ENCODE measurements at regions of chr12 and their contacts with region 1.

Region 1: DNA sequence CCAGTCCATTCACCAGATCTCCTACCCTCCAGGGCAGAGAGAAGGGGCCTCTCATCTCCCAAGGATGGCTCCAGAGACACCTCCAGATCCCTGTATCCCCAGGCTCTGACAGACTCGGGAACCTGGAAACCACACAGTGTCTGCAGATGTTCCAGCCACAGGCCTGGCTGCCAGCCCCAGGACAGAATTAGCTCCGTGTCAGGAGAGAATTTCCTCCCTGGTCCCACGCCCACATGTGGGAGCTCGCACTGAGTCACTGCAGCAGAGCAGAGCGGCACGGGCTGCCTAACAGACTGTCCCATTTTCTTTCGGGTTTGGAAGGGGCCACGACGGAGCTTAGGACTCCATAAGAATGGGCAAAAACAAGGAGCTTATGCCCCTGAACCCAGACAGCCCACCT is 33.6 kb downstream of the CMKLR1 start:
- DNase-seq: no peak
- CTCF ChIP-seq: no peak

Region 2: DNA sequence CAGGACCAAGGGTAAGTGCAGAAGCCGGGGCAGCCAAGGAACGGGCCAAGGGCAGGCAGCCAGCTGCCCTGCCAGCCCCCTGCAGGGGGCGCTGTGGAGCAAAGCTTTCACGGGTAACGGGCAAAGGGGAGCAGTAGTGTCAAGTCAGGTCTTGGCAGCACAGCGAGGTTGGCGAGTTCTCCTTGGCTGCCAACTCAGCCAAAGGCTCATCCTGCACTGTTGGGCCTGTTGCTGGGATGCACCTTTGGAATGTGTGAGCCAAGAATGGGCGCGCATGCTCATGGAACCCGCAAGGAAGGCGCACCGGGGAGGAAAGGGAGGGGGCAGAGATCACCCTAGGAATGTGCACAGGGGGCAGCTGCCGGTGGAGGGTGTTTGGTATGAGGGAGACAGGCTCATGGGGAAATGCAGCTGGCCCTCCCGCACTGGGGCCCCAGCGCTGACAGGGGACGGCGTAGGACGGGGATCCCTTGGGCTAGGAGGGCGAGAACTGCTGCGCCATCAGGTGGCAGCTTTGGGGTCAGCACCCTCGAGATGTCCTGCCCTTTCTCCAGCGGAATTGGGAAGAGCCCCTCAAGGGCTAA is 393.0 kb before region 1 on chr12:
- CTCF ChIA-PET with region 1: no interaction called
- POLR2A ChIA-PET with region 1: no interaction called
- DNase-seq: peak; percentile 82
- CTCF ChIP-seq: peak; percentile 91

Region 3: GRCh38 chr12:108004319-108004718 is 301.2 kb before region 1 on chr12:
- CTCF ChIA-PET with region 1: no interaction called
- POLR2A ChIA-PET with region 1: no interaction called
- DNase-seq: no peak
- CTCF ChIP-seq: no peak

Region 4: DNA sequence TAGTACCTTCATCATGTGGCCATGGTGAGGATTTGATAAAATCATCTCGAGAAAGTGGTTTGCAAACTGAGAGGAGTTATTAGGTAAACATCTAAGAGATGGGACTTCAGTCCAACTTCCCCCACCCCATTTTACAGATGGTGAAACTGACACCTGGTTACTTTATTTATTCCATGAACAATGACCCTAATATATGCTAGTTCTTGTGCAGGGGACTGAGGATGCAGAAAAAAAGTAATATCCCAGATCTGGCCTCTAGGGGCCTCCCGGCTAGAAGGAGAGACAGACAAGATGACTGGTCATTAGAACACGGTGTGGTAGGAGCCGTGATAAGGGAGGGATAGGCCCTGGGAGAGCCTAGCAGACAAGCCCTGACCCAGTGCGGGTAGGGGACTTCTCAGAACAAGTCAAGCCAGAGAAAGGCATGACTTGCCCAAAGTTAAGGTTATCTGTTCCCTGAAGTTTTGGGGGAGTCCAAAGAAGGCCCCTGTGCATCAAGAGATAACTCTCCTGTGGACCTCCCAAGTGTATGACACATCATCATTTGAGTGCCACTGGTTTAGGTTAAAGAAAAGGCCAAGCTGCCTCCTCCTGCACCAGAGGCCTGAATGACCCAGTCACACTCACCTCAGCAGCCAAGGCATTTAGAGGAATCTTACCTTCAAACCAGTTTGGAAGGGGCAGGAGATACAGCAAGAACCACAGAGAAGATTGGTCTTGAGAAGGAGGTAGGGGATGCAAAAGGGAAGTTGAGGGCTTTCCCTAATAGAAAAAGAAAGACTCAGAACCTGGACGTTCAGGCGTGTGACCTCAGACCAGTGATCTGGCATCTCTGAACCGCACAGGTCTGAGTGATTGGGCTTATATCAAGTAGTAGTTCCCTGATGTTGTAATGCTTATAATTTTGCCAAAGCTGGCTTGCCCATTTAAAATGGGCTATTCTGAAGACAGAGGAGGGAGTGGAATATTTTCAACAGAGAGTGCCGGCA is 32.0 kb after region 1 on chr12:
- CTCF ChIA-PET with region 1: interaction called, 10 read pairs
- POLR2A ChIA-PET with region 1: no interaction called
- DNase-seq: peak; percentile 61
- CTCF ChIP-seq: peak; percentile 44

Region 5: GRCh38 chr12:108633534-108634248 is 328.2 kb after region 1 on chr12 and contains the start of gene SELPLG:
- CTCF ChIA-PET with region 1: no interaction called
- POLR2A ChIA-PET with region 1: no interaction called
- DNase-seq: peak; percentile 87
- CTCF ChIP-seq: peak; percentile 20

Measured in GM10248 (cell line).